ENCODE measurements at regions of chr20 and their contacts with region 1.

Region 1: DNA sequence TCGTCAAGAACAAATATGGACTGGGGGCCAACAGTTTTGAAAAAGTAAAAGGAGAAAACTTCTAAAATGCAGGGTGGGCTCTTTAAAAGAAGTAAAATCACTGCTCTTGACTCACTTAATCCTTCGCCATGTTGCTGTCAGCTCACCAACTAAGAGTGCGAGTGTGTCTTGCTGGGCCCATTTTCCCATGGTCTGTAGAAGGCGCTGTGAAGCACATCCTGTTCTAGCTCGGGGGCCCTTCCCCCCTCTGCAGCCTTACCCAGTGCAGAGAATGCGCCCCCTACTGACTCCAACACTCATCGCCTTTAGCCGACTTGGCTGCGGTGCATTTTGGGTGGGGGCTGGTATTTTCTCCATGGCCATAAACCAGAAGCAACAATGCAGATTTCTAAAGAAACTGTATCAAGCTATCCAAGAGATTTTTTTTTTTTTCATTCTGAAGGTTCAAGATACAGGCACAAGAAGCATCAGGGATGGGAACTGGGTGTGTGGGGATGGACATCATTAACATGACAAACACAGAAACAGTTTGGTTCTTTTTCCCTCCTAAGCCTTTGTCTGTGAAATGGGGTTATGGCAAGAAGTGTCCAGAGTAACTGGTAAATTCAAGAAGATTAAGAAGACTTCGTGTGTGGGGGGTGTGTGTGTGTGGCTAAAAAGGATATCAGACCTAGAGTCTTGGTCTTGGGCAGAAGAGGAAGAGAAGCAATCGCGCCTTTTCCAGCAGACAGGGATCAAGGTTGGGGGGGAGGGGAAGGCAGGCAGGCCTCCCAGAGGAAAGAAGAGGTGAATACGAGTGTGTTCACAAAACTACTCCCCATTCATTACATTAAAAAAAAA is 1.7 kb downstream of the ADNP start:
- DNase-seq: peak; percentile 78 to 98 (median 86)

Region 2: GRCh38 chr20:50794846-50795634 is 134.5 kb before region 1 on chr20 and contains the start of gene BCAS4:
- intact Hi-C with region 1: loop called (anchors 1 kb)
- DNase-seq: peak; percentile 50 to 96 (median 74)

Region 3: GRCh38 chr20:50943069-50943468 is 13.6 kb after region 1 on chr20:
- intact Hi-C with region 1: no loop called
- DNase-seq: no peak

Region 4: GRCh38 chr20:50958615-50959542 is 29.4 kb after region 1 on chr20 and contains the start of gene MOCS3:
- intact Hi-C with region 1: loop called (anchors 2 kb)
- DNase-seq: peak; percentile 82 to 97 (median 90)